ENCODE measurements at regions of chr3 and their contacts with region 1.

Region 1: DNA sequence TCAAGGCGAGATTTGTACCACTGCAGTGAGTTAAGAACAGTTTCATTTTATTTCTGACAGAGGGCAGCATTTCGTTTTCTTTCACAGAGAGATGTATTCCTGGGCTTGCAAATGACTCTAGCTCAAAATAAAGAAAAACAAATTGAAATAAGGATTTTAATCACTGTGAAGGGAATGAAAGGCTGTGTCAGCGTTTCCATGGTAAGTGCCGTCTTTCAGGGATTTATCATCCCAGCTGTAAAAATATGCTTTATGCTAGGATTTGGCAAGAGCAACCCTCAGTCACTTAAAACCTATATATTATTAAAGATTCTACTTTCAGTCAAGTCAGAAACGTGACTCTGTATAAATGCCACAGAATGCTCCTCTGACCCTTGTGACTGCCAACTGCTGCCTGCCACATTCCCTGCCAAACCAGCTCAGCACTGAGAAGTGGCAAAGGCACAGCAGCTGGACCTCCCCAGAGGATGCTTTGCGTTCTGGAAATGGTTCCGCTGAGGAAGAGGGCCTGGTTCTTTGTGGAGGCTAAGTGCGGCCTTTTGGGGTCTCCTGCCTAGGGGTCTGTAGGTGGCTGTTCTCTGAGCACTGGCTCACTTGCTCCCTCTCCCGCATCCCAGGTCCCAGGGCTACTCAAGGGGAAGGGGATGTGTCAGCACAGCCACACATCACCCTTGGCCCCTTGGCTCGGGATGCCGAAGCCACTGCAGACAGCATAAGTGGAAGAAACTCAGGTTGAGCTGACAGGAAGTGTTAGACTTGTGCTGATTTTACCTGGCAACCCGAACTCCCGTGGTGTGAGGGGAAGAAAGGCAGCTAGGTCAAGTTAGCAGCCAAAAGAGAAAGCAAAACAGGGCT is 56.6 kb upstream of the POMGNT2 start:
- DNase-seq: no peak
- H3K4me3 ChIP-seq: no peak overlapping the region
- H3K27ac ChIP-seq: no peak overlapping the region
- H3K4me1 ChIP-seq: no peaks in the 10 kb centered on the region
- H3K27me3 ChIP-seq: no peaks in the 10 kb centered on the region
- CTCF ChIP-seq: peak in 3 of 4 experiments; percentile 20 to 34 (median 33)
- POLR2A ChIP-seq: no peak

Region 2: GRCh38 chr3:42831321-42831713 is 331.1 kb before region 1 on chr3:
- intact Hi-C with region 1: no loop called
- DNase-seq: peak; percentile 47
- H3K4me3 ChIP-seq: no peak overlapping the region
- H3K27ac ChIP-seq: no peak overlapping the region
- H3K4me1 ChIP-seq: no peaks in the 10 kb centered on the region
- H3K27me3 ChIP-seq: no peaks in the 10 kb centered on the region
- CTCF ChIP-seq: peak; percentile 26 to 67 (median 64)
- POLR2A ChIP-seq: no peak

Region 3: GRCh38 chr3:43503067-43503728 is 340.7 kb after region 1 on chr3:
- intact Hi-C with region 1: loop called (anchors 5 kb)
- DNase-seq: no peak
- H3K4me3 ChIP-seq: no peak overlapping the region
- H3K27ac ChIP-seq: peak overlapping the region in 1 of 2 donors; percentile 25
- H3K4me1 ChIP-seq: no peaks in the 10 kb centered on the region
- H3K27me3 ChIP-seq: no peaks in the 10 kb centered on the region
- CTCF ChIP-seq: peak; percentile 24 to 68 (median 58)
- POLR2A ChIP-seq: no peak